Body of pancreas (tissue), 4 donors: ENCODE measurements at regions of chr10 and their contacts with region 1.

Region 1: DNA sequence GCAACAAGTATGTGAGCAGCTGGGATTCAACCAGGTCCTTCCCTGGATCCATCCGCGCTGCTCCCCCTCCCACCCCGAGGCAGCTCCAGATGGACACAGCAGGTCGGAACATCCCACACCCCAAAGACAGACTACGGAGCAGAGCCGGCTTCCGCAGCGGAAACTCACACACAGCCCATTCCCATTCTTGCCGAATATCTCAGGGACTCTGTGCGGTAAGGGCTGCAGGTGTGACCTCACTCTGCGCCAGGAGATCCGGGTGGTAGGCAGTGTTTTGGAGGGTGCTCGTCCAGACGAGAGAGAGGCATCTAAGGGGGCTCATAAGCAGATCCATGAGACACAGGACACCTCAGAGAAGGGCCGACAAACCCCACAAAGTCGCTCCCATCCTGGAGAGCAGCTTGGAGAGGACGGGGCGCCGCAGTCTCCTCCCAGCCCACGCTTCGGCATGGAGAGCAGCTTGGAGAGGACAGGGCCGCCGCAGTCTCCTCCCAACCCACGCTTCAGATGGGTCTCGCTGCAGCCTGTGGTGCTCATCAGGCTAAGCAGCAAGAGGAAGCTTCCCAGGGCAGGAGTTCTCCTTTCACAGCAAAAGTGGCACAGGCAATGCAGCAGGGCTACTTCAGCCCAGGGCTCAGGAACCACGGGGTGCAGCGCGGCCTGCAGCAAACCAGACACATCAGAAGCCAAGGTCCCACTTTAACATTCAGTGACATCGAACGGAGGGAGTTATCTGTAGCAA is 179.9 kb downstream of the DIP2C start:
- DNase-seq: no peak
- ATAC-seq: no peak
- H3K4me3 ChIP-seq: no peak overlapping the region
- H3K27ac ChIP-seq: no peak overlapping the region
- H3K4me1 ChIP-seq: peaks cover 27% of the 10 kb centered on the region
- H3K27me3 ChIP-seq: no peaks in the 10 kb centered on the region
- CTCF ChIP-seq: no peak
- POLR2A ChIP-seq: no peak

Region 2: DNA sequence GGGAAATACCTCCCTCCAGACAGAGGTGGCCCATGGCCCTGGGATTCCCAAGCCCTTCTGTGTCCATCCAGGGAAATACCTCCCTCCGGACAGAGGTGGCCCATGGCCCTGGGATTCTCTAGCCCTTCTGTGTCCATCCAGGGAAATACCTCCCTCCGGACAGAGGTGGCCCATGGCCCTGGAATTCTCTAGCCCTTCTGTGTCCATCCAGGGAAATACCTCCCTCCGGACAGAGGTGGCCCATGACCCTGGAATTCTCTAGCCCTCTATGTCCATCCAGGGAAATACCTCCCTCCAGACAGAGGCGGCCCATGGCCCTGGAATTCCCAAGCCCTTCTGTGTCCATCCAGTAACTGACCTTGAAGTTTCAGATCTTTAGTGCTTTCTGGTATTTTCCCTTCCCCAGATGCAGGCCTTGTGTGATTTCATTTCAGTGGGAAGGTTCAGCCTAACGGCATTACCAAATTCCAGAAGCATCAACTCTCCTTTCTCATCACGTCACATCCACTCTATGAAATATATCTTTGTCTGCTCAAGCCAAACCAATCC is 208.7 kb after region 1 on chr10:
- intact Hi-C with region 1: no loop called
- DNase-seq: no peak
- ATAC-seq: no peak
- H3K4me3 ChIP-seq: no peak overlapping the region
- H3K27ac ChIP-seq: no peak overlapping the region
- H3K4me1 ChIP-seq: no peaks in the 10 kb centered on the region
- H3K27me3 ChIP-seq: no peaks in the 10 kb centered on the region
- CTCF ChIP-seq: no peak
- POLR2A ChIP-seq: no peak

Region 3: GRCh38 chr10:794466-794865 is 284.9 kb after region 1 on chr10:
- intact Hi-C with region 1: loop called (anchors 5 kb)
- DNase-seq: peak in 1 of 4 donors; percentile 4
- ATAC-seq: peak; percentile 42
- H3K4me3 ChIP-seq: no peak overlapping the region
- H3K27ac ChIP-seq: no peak overlapping the region
- H3K4me1 ChIP-seq: peaks cover 3% of the 10 kb centered on the region
- H3K27me3 ChIP-seq: no peaks in the 10 kb centered on the region
- CTCF ChIP-seq: peak in 3 of 7 experiments; percentile 16 to 42 (median 28)
- POLR2A ChIP-seq: no peak

Region 4: DNA sequence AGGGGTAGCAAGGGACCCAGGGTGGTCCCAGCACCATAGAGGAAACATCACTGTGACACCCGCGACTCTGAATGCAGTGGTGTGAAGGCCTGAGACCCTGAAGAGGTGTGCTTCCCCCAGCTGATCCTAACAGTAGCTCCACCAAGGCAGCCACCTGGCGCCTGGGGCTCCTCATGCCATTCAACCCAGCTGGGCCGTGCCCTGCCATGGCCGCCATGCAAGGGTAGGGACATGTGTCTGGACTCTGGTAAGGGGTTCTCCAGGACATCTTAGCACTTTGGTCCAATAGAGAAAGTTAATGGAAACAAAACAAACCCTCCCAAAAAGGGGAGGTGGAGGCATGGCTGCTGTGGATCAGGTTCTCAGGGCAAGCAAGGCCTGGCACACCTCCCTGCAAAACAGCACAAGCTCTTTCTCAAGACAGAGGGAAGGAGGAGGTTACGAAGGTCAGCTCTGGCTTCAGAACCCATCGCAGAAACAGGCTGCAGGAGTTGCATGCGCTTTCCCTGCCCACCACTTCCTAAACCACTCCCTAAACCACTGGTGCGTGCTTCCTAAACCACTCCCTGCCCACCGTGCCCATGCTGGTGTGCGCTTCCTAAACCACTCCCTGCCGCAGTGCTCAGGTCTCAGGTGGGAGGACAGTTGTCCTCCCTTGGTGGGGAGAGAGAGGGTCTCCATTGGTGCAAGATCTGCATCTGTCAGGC is 313.3 kb after region 1 on chr10:
- intact Hi-C with region 1: no loop called
- DNase-seq: no peak
- ATAC-seq: no peak
- H3K4me3 ChIP-seq: no peak overlapping the region
- H3K27ac ChIP-seq: no peak overlapping the region
- H3K4me1 ChIP-seq: peaks cover 3% of the 10 kb centered on the region
- H3K27me3 ChIP-seq: no peaks in the 10 kb centered on the region
- CTCF ChIP-seq: no peak
- POLR2A ChIP-seq: no peak